GM10248 (cell line): ENCODE measurements at regions of chr2 and their contacts with region 1.

Region 1: GRCh38 chr2:180559038-180559437 is 421.4 kb upstream of the UBE2E3 start:
- DNase-seq: no peak
- CTCF ChIP-seq: no peak

Region 2: GRCh38 chr2:180376066-180376465 is 183.0 kb before region 1 on chr2:
- CTCF ChIA-PET with region 1: no interaction called
- POLR2A ChIA-PET with region 1: no interaction called
- DNase-seq: no peak
- CTCF ChIP-seq: no peak

Region 3: GRCh38 chr2:180542511-180542910 is 16.5 kb before region 1 on chr2:
- CTCF ChIA-PET with region 1: interaction called, 14 read pairs
- POLR2A ChIA-PET with region 1: no interaction called
- DNase-seq: no peak
- CTCF ChIP-seq: no peak

Region 4: GRCh38 chr2:180644709-180645108 is 85.7 kb after region 1 on chr2:
- CTCF ChIA-PET with region 1: no interaction called
- POLR2A ChIA-PET with region 1: no interaction called
- DNase-seq: no peak
- CTCF ChIP-seq: no peak